CD4-positive, alpha-beta memory T cell (primary cell): ENCODE measurements at regions of chr19 and their contacts with region 1.

Region 1: DNA sequence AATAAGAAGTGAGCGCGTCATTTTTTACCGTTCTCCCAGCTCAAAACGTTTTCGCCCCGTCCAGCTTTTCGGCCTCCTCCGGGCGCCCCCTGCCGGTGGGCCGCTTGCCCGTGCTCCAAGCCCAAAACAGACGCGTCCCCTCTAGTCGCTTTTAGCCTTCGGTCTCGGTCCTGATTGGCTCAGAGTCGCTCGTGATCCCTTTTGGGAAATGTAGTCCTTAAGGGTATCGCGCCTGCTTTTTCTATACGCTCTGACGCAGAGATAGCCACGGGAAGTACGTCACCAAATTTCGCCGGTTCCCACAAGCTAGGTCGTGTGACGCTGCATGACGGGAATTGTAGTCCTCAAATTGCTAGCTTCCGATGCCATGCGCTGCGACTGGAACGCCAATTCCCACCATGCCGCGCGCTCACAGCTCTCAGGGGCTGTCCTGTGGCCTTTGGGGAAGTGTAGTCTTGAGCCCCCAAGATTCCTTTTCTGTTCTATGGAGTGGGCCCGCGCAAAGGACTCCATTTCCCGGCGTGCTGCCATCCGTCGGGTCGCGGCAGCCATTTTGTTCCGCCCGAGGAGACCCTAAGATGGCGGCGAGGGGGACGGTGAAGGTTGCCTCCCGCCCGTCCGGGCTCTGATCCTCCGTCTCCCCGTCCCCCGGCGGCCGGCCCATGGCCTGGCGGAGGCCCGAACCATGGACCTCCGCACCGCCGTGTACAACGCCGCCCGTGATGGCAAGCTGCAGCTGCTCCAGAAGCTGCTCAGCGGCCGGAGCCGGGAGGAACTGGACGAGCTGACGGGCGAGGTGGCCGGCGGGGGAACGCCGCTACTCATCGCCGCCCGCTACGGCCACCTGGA is at the start of gene FEM1A:
- DNase-seq: peak; percentile 97 to 100 (median 100)
- H3K4me3 ChIP-seq: peak within 1 kb of the TSS in 1 of 2 donors; percentile 74
- H3K4me3 Mint-ChIP-seq: peak within 1 kb of the TSS; percentile 83 to 90 (median 84)
- H3K27ac ChIP-seq: peak within 1 kb of the TSS; percentile 89
- H3K27ac Mint-ChIP-seq: peak within 1 kb of the TSS; percentile 82 to 95 (median 92)
- H3K4me1 ChIP-seq: peaks cover 36% of the 10 kb centered on the region
- H3K4me1 Mint-ChIP-seq: peaks cover 8 to 40% (median 22%) of the 10 kb centered on the region in 4 donors
- H3K27me3 ChIP-seq: no peaks in the 10 kb centered on the region
- H3K27me3 Mint-ChIP-seq: no peaks in the 10 kb centered on the region
- total RNA-seq, gene FEM1A: 16.7 TPM

Region 2: GRCh38 chr19:4633140-4633967 is 158.0 kb before region 1 on chr19:
- CTCF ChIA-PET with region 1: interaction called, 6 read pairs
- POLR2A ChIA-PET with region 1: no interaction called
- intact Hi-C with region 1: loop called (anchors 1 kb)
- DNase-seq: peak in 4 of 5 donors; percentile 29 to 49 (median 40)
- H3K4me3 ChIP-seq: no peak overlapping the region
- H3K4me3 Mint-ChIP-seq: peak overlapping the region in 3 of 8 donors; percentile 21 to 81 (median 49)
- H3K27ac ChIP-seq: no peak overlapping the region
- H3K27ac Mint-ChIP-seq: peak overlapping the region in 4 of 7 donors; percentile 36 to 91 (median 87)
- H3K4me1 ChIP-seq: peaks cover 14% of the 10 kb centered on the region
- H3K4me1 Mint-ChIP-seq: peaks cover 4 to 17% (median 11%) of the 10 kb centered on the region in 4 donors
- H3K27me3 ChIP-seq: no peaks in the 10 kb centered on the region
- H3K27me3 Mint-ChIP-seq: peaks cover 6 to 8% of the 10 kb centered on the region in 2 donors

Region 3: DNA sequence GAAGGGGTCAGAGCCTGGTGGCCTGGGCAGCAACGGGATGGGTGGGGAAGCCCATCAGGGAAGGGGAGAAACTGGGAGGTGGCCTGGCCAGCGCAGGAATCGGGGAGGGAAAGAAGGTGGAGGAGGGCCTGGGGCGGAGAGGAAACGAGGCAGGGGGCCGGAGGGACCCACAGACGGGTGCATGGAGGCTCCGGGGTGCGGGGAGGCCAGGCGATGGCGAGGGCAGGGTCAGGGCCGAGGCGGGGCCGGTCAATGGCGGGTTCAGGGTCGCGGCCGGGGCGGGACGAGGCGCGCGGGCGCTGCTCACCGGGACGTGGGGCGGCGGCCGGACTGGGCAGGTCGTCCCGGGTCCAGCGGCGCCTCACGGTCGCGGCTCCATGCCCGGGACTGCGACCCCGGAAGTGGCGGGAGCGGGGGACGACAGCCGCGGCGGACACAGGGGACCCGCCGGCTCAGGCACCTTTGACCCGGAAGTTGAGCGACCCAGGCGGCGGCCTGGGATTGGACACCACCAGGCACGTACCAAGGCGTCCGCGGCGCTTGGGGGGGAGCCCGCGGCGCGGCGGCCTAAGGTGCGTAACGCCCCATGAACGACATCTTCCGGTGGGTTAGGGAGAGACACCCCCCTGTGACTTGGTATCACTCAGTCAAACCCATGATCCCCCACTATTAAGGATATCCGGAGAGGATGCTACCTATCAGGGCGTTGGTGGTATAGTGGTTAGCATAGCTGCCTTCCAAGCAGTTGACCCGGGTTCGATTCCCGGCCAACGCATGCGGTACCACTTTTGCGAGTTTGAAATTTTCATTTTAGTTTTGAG is 67.8 kb before region 1 on chr19 and contains the start of gene DPP9:
- CTCF ChIA-PET with region 1: interaction called, 162 read pairs
- POLR2A ChIA-PET with region 1: interaction called, 76 read pairs
- intact Hi-C with region 1: loop called (anchors 1 kb)
- DNase-seq: peak; percentile 98 to 99 (median 99)
- H3K4me3 ChIP-seq: peak within 1 kb of the TSS; percentile 89 to 96
- H3K4me3 Mint-ChIP-seq: peak within 1 kb of the TSS; percentile 90 to 97 (median 93)
- H3K27ac ChIP-seq: peak within 1 kb of the TSS; percentile 86
- H3K27ac Mint-ChIP-seq: peak within 1 kb of the TSS; percentile 95 to 100 (median 98)
- H3K4me1 ChIP-seq: peaks cover 36% of the 10 kb centered on the region
- H3K4me1 Mint-ChIP-seq: peaks cover 15 to 47% (median 31%) of the 10 kb centered on the region in 4 donors
- H3K27me3 ChIP-seq: no peaks in the 10 kb centered on the region
- H3K27me3 Mint-ChIP-seq: peaks cover 4 to 10% of the 10 kb centered on the region in 2 donors
- total RNA-seq, gene DPP9: 86.9 to 93.9 TPM

Region 4: GRCh38 chr19:4768934-4769777 is 22.2 kb before region 1 on chr19:
- CTCF ChIA-PET with region 1: interaction called, 3 read pairs
- POLR2A ChIA-PET with region 1: no interaction called
- intact Hi-C with region 1: loop called (anchors 1 kb)
- DNase-seq: peak; percentile 79 to 88 (median 80)
- H3K4me3 ChIP-seq: no peak overlapping the region
- H3K4me3 Mint-ChIP-seq: no peak overlapping the region
- H3K27ac ChIP-seq: no peak overlapping the region
- H3K27ac Mint-ChIP-seq: peak overlapping the region in 4 of 7 donors; percentile 61 to 79 (median 78)
- H3K4me1 ChIP-seq: no peaks in the 10 kb centered on the region
- H3K4me1 Mint-ChIP-seq: peaks cover 2 to 6% (median 4%) of the 10 kb centered on the region in 4 donors
- H3K27me3 ChIP-seq: no peaks in the 10 kb centered on the region
- H3K27me3 Mint-ChIP-seq: peaks cover 11 to 22% of the 10 kb centered on the region in 2 donors

Region 5: DNA sequence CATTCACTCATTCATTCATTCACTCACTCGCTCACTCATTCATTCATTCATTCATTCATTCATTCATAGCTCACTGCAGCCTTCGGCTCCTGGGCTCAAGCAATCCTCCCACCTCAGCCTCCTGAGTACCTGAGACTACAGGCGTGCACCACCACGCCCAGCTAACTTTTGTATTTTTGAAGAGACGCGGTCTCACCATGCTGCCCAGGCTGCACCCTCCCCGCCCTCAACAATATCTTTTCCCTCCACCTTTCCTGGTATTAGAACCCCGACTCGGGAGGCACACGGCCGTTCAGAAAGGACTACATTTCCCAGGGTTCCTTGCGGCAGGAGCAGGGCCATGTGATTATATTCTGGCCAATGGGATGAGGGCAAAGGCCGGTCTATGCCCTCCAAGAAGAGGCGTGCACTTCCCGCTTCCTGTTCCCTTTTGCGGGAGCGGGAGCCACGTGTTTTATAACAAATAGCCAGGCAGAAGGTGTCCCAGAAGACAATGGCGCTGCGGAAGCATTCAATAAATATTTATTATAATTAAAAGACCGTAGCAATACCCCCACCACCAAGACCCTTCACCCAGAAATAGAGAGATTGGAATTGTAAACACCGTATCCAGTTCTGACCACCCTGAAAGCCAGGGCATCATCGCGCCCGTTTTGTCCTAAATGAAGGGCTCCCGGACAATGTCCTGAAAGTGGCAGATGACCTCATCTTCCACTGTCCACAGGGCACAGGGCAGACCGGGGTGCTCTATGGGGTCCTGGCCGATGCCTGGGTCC is 24.2 kb after region 1 on chr19:
- CTCF ChIA-PET with region 1: interaction called, 48 read pairs
- POLR2A ChIA-PET with region 1: no interaction called
- intact Hi-C with region 1: loop called (anchors 1 kb)
- DNase-seq: peak; percentile 60 to 76 (median 68)
- H3K4me3 ChIP-seq: peak overlapping the region in 1 of 2 donors; percentile 16
- H3K4me3 Mint-ChIP-seq: peak overlapping the region; percentile 55 to 85 (median 80)
- H3K27ac ChIP-seq: no peak overlapping the region
- H3K27ac Mint-ChIP-seq: peak overlapping the region; percentile 43 to 94 (median 88)
- H3K4me1 ChIP-seq: peaks cover 8% of the 10 kb centered on the region
- H3K4me1 Mint-ChIP-seq: peaks cover 9 to 21% (median 13%) of the 10 kb centered on the region in 4 donors
- H3K27me3 ChIP-seq: no peaks in the 10 kb centered on the region
- H3K27me3 Mint-ChIP-seq: no peaks in the 10 kb centered on the region

Region 6: GRCh38 chr19:5031231-5032100 is 240.1 kb after region 1 on chr19:
- CTCF ChIA-PET with region 1: no interaction called
- POLR2A ChIA-PET with region 1: no interaction called
- intact Hi-C with region 1: no loop called
- DNase-seq: peak; percentile 67 to 80 (median 71)
- H3K4me3 ChIP-seq: no peak overlapping the region
- H3K4me3 Mint-ChIP-seq: no peak overlapping the region
- H3K27ac ChIP-seq: no peak overlapping the region
- H3K27ac Mint-ChIP-seq: peak overlapping the region in 1 of 7 donors; percentile 18
- H3K4me1 ChIP-seq: peaks cover 7% of the 10 kb centered on the region
- H3K4me1 Mint-ChIP-seq: peaks cover 0 to 17% (median 7%) of the 10 kb centered on the region in 4 donors
- H3K27me3 ChIP-seq: no peaks in the 10 kb centered on the region
- H3K27me3 Mint-ChIP-seq: no peaks in the 10 kb centered on the region

Region 7: GRCh38 chr19:5790573-5791520 is 999.5 kb after region 1 on chr19 and contains the start of gene DUS3L:
- CTCF ChIA-PET with region 1: no interaction called
- POLR2A ChIA-PET with region 1: no interaction called
- intact Hi-C with region 1: loop called (anchors 2 kb)
- DNase-seq: peak; percentile 92 to 98 (median 97)
- H3K4me3 ChIP-seq: peak within 1 kb of the TSS; percentile 62 to 93
- H3K4me3 Mint-ChIP-seq: peak within 1 kb of the TSS; percentile 96 to 100 (median 99)
- H3K27ac ChIP-seq: peak within 1 kb of the TSS; percentile 97
- H3K27ac Mint-ChIP-seq: peak within 1 kb of the TSS; percentile 94 to 100 (median 100)
- H3K4me1 ChIP-seq: peaks cover 14% of the 10 kb centered on the region
- H3K4me1 Mint-ChIP-seq: peaks cover 11 to 24% (median 12%) of the 10 kb centered on the region in 4 donors
- H3K27me3 ChIP-seq: no peaks in the 10 kb centered on the region
- H3K27me3 Mint-ChIP-seq: peaks cover 0 to 2% of the 10 kb centered on the region in 2 donors
- total RNA-seq, gene DUS3L: 58.7 to 72.9 TPM